ENCODE measurements at regions of chr2 and their contacts with region 1.

Region 1: GRCh38 chr2:100000915-100001707 is 141.3 kb downstream of the AFF3 start:
- DNase-seq: no peak
- ATAC-seq: peak; percentile 44
- H3K4me3 ChIP-seq: peak overlapping the region; percentile 68
- H3K27ac ChIP-seq: no peak overlapping the region
- H3K4me1 ChIP-seq: 0 out of 2 replicates have a peak, but pooled peaks cover 10% of the 10 kb centered on the region
- H3K27me3 ChIP-seq: no peaks in the 10 kb centered on the region
- CTCF ChIP-seq: no peak

Region 2: DNA sequence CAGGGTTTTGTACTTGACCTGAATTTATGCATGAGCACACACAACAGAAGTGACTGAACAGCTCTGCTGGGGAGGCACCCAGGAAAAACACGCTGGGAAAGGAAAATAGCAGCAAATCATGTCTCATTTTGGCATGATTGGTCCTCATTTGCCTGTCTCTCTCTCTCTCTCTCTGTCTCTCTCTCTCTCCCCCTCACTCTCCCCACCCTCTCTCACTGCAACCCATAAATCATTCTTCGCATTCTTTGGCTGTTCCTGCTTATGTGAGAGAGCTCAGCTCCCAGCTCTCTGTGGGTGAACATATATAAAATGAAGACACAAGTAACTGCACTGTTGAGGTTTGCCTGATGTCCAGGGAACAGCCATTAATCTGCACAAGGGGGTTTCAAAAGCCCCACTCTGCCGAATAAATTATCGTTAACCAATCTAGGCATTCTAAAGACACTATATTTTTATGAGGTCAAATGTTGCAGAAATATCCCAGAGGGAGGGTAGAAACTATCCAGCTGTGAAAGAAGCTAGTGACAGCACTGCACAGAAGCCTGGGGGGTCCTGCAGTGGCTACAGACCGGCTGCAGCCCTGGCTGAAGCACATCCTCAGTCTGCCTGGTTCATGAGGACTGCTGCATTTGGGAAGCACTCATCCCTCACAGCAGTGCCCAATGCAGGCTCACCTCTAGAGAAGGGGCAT is 119.1 kb before region 1 on chr2:
- CTCF ChIA-PET with region 1: no interaction called
- POLR2A ChIA-PET with region 1: no interaction called
- intact Hi-C with region 1: loop called (anchors 5 kb)
- DNase-seq: peak; percentile 60
- ATAC-seq: no peak
- H3K4me3 ChIP-seq: no peak overlapping the region
- H3K27ac ChIP-seq: no peak overlapping the region
- H3K4me1 ChIP-seq: peaks cover 40% of the 10 kb centered on the region
- H3K27me3 ChIP-seq: no peaks in the 10 kb centered on the region
- CTCF ChIP-seq: no peak

Region 3: DNA sequence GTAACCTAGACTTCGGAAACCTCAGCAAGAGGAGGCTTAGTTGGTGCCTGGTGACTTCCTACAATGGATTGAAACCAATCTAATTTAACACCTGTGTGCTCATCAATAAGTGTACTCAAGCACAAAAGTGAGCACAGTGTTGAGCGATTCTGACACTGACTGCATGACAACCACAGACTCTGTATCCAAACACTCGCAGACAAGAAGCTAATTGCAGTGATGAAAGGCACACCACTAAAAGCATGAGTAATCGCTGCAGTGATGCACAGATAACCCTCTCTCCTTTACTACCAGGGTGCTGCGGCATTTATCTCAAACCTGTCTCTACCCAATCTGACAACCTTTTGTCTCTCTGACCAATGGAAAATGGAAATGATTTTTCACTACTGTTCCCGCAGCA is 26.8 kb before region 1 on chr2:
- CTCF ChIA-PET with region 1: no interaction called
- POLR2A ChIA-PET with region 1: no interaction called
- intact Hi-C with region 1: loop called (anchors 2 kb)
- DNase-seq: peak; percentile 52
- ATAC-seq: peak; percentile 27
- H3K4me3 ChIP-seq: peak overlapping the region; percentile 34; the same call in 1 of the 2 replicates
- H3K27ac ChIP-seq: peak overlapping the region; percentile 89
- H3K4me1 ChIP-seq: peaks cover 55% of the 10 kb centered on the region
- H3K27me3 ChIP-seq: no peaks in the 10 kb centered on the region
- CTCF ChIP-seq: no peak

Measured in PC-3 (cell line).